ENCODE measurements at regions of chrX and their contacts with region 1.

Region 1: GRCh38 chrX:68396961-68397419 is 36.3 kb downstream of the OPHN1 start:
- DNase-seq: no peak
- H3K4me3 ChIP-seq: no peak overlapping the region
- H3K27ac ChIP-seq: no peak overlapping the region
- H3K27me3 ChIP-seq: peaks cover 0 to 45% (median 11%) of the 10 kb centered on the region in 45 donors
- CTCF ChIP-seq: no peak

Region 2: DNA sequence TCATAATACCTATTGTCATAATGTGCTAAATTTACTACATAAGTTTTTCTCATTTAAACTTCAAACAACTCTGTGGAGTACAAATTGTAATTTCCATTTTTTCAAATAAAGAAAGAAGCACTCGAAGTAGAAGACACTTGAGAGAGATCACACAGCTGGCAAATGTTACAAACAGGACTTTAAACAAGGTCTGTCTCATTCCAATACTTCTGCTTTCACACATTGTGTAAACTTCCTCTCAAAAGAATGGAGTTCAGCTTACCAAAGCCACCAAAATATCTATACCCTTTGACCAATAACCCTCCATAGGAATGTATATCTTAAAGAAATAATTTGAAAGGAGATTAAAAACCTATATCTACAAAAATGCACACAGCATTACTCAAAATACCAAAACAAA is 52.0 kb before region 1 on chrX:
- intact Hi-C with region 1: loop called in 1 of 2 experiments (anchors 10 kb)
- DNase-seq: no peak
- H3K4me3 ChIP-seq: no peak overlapping the region
- H3K27ac ChIP-seq: no peak overlapping the region
- H3K27me3 ChIP-seq: peaks cover 0 to 47% (median 0%) of the 10 kb centered on the region in 45 donors
- CTCF ChIP-seq: no peak